Natural killer cell (primary cell): ENCODE measurements at regions of chr2 and their contacts with region 1.

Region 1: GRCh38 chr2:24382363-24383073 is 22.2 kb upstream of the ITSN2 start:
- DNase-seq: peak; percentile 38 to 84
- ATAC-seq: peak; percentile 89 to 97 (median 95)
- H3K4me3 ChIP-seq: no peak overlapping the region
- H3K4me3 Mint-ChIP-seq: no peak overlapping the region
- H3K27ac ChIP-seq: no peak overlapping the region
- H3K27ac Mint-ChIP-seq: no peak overlapping the region
- H3K4me1 ChIP-seq: no peaks in the 10 kb centered on the region
- H3K4me1 Mint-ChIP-seq: no peaks in the 10 kb centered on the region
- H3K27me3 ChIP-seq: no peaks in the 10 kb centered on the region
- H3K27me3 Mint-ChIP-seq: no peaks in the 10 kb centered on the region
- CTCF ChIP-seq: peak; percentile 67

Region 2: GRCh38 chr2:23487735-23488510 is 894.6 kb before region 1 on chr2:
- intact Hi-C with region 1: no loop called
- DNase-seq: no peak
- ATAC-seq: no peak
- H3K4me3 ChIP-seq: no peak overlapping the region
- H3K4me3 Mint-ChIP-seq: no peak overlapping the region
- H3K27ac ChIP-seq: no peak overlapping the region
- H3K27ac Mint-ChIP-seq: no peak overlapping the region
- H3K4me1 ChIP-seq: no peaks in the 10 kb centered on the region
- H3K4me1 Mint-ChIP-seq: no peaks in the 10 kb centered on the region
- H3K27me3 ChIP-seq: no peaks in the 10 kb centered on the region
- H3K27me3 Mint-ChIP-seq: peaks cover 4 to 25% of the 10 kb centered on the region in 2 donors
- CTCF ChIP-seq: no peak

Region 3: DNA sequence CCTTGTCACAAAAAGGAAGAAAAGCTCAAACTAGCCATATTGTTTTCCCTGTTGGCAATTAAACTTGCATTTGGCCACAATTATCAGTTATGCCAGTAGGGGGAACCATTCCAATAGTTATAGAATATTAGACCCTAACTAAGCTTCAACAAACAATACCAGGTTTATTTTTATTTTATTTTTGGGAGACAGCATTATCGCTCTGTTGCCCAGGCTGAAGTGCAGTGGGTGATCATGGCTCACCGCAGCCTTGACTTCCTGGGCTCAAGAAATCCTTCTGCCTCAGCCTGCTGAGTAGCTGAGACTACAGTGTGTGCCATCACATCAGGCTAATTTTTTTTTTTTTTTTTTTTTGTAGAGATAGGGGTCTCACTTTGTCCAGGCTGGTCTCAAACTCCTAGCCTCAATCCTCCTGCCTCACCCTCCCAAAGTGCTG is 557.7 kb before region 1 on chr2:
- intact Hi-C with region 1: loop called (anchors 5 kb)
- DNase-seq: peak in 1 of 2 donors; percentile 75
- ATAC-seq: peak; percentile 70 to 81 (median 71)
- H3K4me3 ChIP-seq: no peak overlapping the region
- H3K4me3 Mint-ChIP-seq: no peak overlapping the region
- H3K27ac ChIP-seq: no peak overlapping the region
- H3K27ac Mint-ChIP-seq: peak overlapping the region in 1 of 2 donors; percentile 11
- H3K4me1 ChIP-seq: no peaks in the 10 kb centered on the region
- H3K4me1 Mint-ChIP-seq: no peaks in the 10 kb centered on the region
- H3K27me3 ChIP-seq: no peaks in the 10 kb centered on the region
- H3K27me3 Mint-ChIP-seq: no peaks in the 10 kb centered on the region
- CTCF ChIP-seq: peak; percentile 81

Region 4: GRCh38 chr2:24228470-24228869 is 154.0 kb before region 1 on chr2:
- intact Hi-C with region 1: loop called (anchors 1 kb)
- DNase-seq: peak in 1 of 2 donors; percentile 13
- ATAC-seq: no peak
- H3K4me3 ChIP-seq: no peak overlapping the region
- H3K4me3 Mint-ChIP-seq: no peak overlapping the region
- H3K27ac ChIP-seq: no peak overlapping the region
- H3K27ac Mint-ChIP-seq: no peak overlapping the region
- H3K4me1 ChIP-seq: no peaks in the 10 kb centered on the region
- H3K4me1 Mint-ChIP-seq: no peaks in the 10 kb centered on the region
- H3K27me3 ChIP-seq: no peaks in the 10 kb centered on the region
- H3K27me3 Mint-ChIP-seq: no peaks in the 10 kb centered on the region
- CTCF ChIP-seq: no peak

Region 5: GRCh38 chr2:24237313-24237712 is 145.2 kb before region 1 on chr2:
- intact Hi-C with region 1: loop called (anchors 1 kb)
- DNase-seq: no peak
- ATAC-seq: no peak
- H3K4me3 ChIP-seq: no peak overlapping the region
- H3K4me3 Mint-ChIP-seq: no peak overlapping the region
- H3K27ac ChIP-seq: no peak overlapping the region
- H3K27ac Mint-ChIP-seq: peak overlapping the region in 1 of 2 donors; percentile 3
- H3K4me1 ChIP-seq: no peaks in the 10 kb centered on the region
- H3K4me1 Mint-ChIP-seq: peaks cover 0 to 5% of the 10 kb centered on the region in 2 donors
- H3K27me3 ChIP-seq: no peaks in the 10 kb centered on the region
- H3K27me3 Mint-ChIP-seq: no peaks in the 10 kb centered on the region
- CTCF ChIP-seq: no peak

Region 6: GRCh38 chr2:24276349-24276899 is 106.1 kb before region 1 on chr2:
- intact Hi-C with region 1: no loop called
- DNase-seq: no peak
- ATAC-seq: no peak
- H3K4me3 ChIP-seq: no peak overlapping the region
- H3K4me3 Mint-ChIP-seq: no peak overlapping the region
- H3K27ac ChIP-seq: no peak overlapping the region
- H3K27ac Mint-ChIP-seq: peak overlapping the region in 1 of 2 donors; percentile 9
- H3K4me1 ChIP-seq: no peaks in the 10 kb centered on the region
- H3K4me1 Mint-ChIP-seq: no peaks in the 10 kb centered on the region
- H3K27me3 ChIP-seq: no peaks in the 10 kb centered on the region
- H3K27me3 Mint-ChIP-seq: no peaks in the 10 kb centered on the region
- CTCF ChIP-seq: no peak

Region 7: DNA sequence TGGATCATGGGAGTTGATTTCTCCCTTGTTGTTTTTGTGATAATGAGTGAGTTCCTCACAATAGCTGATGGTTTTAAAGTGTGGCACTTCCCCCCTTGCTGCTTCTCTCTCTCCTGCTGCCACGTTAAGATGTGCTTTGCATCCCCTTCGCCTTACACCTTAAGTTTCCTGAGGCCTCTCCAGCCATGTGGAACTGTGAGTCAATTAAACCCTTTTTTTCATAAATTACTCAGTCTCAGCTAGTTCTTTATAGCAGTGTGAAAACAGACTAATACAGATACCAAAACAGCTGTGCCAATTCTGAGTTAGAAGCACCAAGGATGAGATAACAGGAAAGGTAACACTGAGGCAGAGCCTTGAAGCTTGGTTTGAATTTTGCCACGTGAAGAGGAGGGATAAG is 66.8 kb before region 1 on chr2:
- intact Hi-C with region 1: no loop called
- DNase-seq: no peak
- ATAC-seq: no peak
- H3K4me3 ChIP-seq: no peak overlapping the region
- H3K4me3 Mint-ChIP-seq: no peak overlapping the region
- H3K27ac ChIP-seq: no peak overlapping the region
- H3K27ac Mint-ChIP-seq: peak overlapping the region in 1 of 2 donors; percentile 44
- H3K4me1 ChIP-seq: no peaks in the 10 kb centered on the region
- H3K4me1 Mint-ChIP-seq: peaks cover 31 to 43% of the 10 kb centered on the region in 2 donors
- H3K27me3 ChIP-seq: no peaks in the 10 kb centered on the region
- H3K27me3 Mint-ChIP-seq: no peaks in the 10 kb centered on the region
- CTCF ChIP-seq: no peak